Psoas muscle (tissue), 8 donors: ENCODE measurements at regions of chr2 and their contacts with region 1.

Region 1: GRCh38 chr2:49569176-49569575 is 414.9 kb upstream of the FSHR start:
- DNase-seq: no peak
- ATAC-seq: no peak
- H3K4me3 ChIP-seq: no peak overlapping the region
- H3K27ac ChIP-seq: no peak overlapping the region
- H3K4me1 ChIP-seq: no peaks in the 10 kb centered on the region
- H3K27me3 ChIP-seq: no peaks in the 10 kb centered on the region
- CTCF ChIP-seq: no peak

Region 2: DNA sequence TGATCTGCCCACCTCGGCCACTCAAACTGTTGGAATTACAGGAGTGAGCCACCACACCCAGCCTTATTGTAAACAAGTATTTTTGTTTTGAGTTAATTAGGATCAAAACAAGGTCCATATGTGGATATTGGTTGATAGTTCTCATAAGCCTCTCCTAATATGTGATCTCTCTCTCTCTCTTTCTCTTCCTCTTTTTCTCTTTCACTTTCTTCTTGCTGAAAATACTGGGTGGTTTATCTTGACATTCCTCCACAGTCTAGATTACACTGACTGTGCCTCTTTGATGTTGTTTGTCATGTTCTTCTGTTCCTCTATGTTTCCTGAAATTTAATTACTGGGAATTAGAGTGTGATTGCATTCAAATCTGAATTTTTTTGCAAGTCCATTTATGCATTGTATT is 2010.2 kb after region 1 on chr2:
- intact Hi-C with region 1: loop called in 1 of 2 experiments (anchors 5 kb)
- DNase-seq: no peak
- ATAC-seq: no peak
- H3K4me3 ChIP-seq: no peak overlapping the region
- H3K27ac ChIP-seq: no peak overlapping the region
- H3K4me1 ChIP-seq: no peaks in the 10 kb centered on the region
- H3K27me3 ChIP-seq: no peaks in the 10 kb centered on the region
- CTCF ChIP-seq: no peak